ENCODE measurements at regions of chr2 and their contacts with region 1.

Region 1: DNA sequence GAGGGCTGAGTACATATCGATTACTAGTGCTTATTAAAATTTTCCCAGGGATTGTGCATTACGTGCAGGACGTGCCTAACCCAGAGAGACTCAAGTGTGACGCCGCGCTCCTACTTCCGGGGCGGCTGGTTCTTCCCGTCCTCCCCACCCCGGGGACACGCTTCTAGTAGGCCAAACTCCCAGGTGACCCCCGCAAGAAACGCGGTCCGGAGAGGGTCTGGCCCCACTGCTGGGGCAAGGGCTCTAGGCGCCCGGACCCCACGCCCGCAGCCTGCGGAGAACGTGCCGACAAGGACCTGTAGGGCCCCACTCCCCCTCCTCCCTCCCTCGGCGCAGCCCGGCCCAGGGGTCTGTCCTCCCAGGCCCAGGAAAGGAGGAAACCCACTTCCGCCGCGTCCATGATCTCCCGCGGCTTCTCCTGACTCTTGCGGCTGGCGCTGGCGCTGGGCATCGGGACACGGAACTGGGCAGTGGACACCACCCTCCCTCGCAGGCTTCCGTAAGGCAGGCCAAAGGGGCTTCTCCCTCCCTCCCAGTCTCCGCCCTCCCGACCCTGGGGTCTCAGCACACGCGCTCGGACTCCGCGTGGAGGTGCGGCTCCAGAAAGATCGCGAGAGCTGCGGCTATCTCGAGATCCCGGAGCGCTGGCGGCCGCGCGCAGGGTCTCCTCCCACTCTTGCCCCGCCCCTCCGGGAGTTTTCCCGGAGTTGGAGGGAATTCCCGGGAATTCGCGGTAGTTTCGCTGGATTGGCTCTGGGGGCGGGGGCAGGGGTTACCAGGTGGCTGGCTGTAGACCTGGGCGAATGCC is at the start of gene DARS1:
- DNase-seq: peak; percentile 58 to 91 (median 76)
- ATAC-seq: peak; percentile 82
- H3K4me3 ChIP-seq: peak within 1 kb of the TSS; percentile 99
- H3K4me3 Mint-ChIP-seq: peak within 1 kb of the TSS; percentile 94
- H3K27ac ChIP-seq: peak within 1 kb of the TSS; percentile 95 to 99
- H3K27ac Mint-ChIP-seq: peak within 1 kb of the TSS; percentile 98
- H3K4me1 ChIP-seq: peaks cover 30% of the 10 kb centered on the region
- H3K4me1 Mint-ChIP-seq: peaks cover 50% of the 10 kb centered on the region
- H3K27me3 ChIP-seq: no peaks in the 10 kb centered on the region
- H3K27me3 Mint-ChIP-seq: no peaks in the 10 kb centered on the region
- CTCF ChIP-seq: no peak
- total RNA-seq, gene DARS1: 33.4 to 35.8 TPM

Region 2: DNA sequence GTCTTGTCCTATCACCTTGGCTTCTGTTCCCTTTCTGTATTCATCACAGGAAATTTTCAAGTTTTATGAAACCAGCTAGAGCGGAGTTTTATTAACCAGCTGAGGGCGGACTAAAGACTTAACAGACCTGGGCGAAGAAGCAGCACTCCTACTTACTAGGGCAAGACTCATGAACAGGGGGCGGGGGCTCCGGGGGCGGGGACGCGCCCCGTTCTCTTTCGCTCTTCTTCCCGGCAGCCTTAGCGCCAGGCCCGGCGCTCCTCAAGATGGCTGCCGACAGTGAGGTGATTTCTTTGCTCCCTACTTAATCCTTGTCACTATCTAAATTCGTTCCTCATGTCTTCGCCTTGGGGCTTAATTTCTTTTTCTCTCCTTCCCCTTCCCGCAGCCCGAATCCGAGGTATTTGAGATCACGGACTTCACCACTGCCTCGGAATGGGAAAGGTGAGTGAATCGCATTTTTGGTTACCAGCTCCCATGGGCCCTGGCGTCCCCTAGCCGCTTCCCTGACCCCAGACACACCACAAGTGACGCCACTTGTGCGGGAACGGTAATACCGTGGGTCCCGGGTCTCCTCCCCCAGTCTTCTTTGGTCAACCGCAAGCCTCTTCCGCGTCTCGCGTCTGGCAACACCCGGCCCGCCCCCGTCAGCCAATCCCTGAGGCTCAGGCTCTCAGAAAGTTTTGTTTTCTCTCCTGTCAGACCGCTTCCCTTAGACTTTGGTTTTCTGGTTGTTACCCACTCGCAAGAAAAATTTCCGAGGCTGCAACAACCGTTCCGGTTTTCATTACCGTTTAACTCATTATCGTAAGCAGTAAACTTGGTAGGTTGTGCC is 933.0 kb before region 1 on chr2 and contains the start of gene RAB3GAP1:
- CTCF ChIA-PET with region 1: no interaction called
- POLR2A ChIA-PET with region 1: no interaction called
- intact Hi-C with region 1: loop called in 1 of 2 experiments (anchors 10 kb)
- DNase-seq: peak; percentile 80 to 97 (median 91)
- ATAC-seq: peak; percentile 80
- H3K4me3 ChIP-seq: peak within 1 kb of the TSS; percentile 79 to 80
- H3K4me3 Mint-ChIP-seq: peak within 1 kb of the TSS; percentile 92
- H3K27ac ChIP-seq: peak within 1 kb of the TSS; percentile 96
- H3K27ac Mint-ChIP-seq: peak within 1 kb of the TSS; percentile 99
- H3K4me1 ChIP-seq: peaks cover 11% of the 10 kb centered on the region
- H3K4me1 Mint-ChIP-seq: peaks cover 42% of the 10 kb centered on the region
- H3K27me3 ChIP-seq: peaks cover 0 to 3% of the 10 kb centered on the region in 2 experiments
- H3K27me3 Mint-ChIP-seq: no peaks in the 10 kb centered on the region
- CTCF ChIP-seq: no peak
- total RNA-seq, gene RAB3GAP1: 31.0 to 32.8 TPM

Region 3: DNA sequence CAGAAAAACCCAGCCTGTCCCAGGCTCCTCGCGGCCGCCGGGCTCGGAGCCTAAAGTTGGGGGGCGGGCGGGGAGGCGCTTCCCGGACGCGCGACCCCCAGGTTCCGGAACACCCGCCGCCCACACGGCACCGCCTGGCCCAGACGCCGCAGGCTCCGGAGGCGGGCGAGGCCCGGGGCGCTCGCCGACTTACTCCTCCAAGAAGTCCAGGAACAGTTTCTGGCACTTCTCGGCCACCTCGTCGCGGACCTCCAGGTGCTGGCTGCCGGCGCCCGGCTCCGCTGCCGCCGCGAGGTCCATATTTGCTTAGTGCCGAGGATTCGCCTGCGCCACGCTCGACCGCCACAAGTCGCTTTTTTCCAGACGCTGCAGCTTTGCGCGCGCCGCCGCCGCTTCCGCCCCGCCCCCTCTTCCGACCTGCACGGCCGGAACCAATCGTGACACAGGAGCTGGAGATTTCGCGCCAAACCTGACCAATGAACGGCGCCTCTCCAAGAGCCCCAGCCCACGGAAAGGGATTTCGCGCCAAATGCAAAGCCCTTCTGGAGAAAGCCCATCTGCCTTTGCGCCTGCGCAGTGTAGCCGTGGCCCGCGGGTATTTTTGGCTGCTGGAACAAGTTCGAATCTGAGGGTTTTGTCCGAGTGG is 109.0 kb before region 1 on chr2 and contains the start of gene MCM6:
- CTCF ChIA-PET with region 1: no interaction called
- POLR2A ChIA-PET with region 1: no interaction called
- intact Hi-C with region 1: loop called (anchors 1 to 5 kb)
- DNase-seq: peak; percentile 95 to 99 (median 97)
- ATAC-seq: peak; percentile 89
- H3K4me3 ChIP-seq: peak within 1 kb of the TSS; percentile 81 to 82
- H3K4me3 Mint-ChIP-seq: peak within 1 kb of the TSS; percentile 92
- H3K27ac ChIP-seq: peak within 1 kb of the TSS; percentile 85 to 96
- H3K27ac Mint-ChIP-seq: peak within 1 kb of the TSS; percentile 97
- H3K4me1 ChIP-seq: peaks cover 18% of the 10 kb centered on the region
- H3K4me1 Mint-ChIP-seq: peaks cover 37% of the 10 kb centered on the region
- H3K27me3 ChIP-seq: no peaks in the 10 kb centered on the region
- H3K27me3 Mint-ChIP-seq: no peaks in the 10 kb centered on the region
- CTCF ChIP-seq: no peak
- total RNA-seq, gene MCM6: 37.3 to 38.8 TPM

Region 4: DNA sequence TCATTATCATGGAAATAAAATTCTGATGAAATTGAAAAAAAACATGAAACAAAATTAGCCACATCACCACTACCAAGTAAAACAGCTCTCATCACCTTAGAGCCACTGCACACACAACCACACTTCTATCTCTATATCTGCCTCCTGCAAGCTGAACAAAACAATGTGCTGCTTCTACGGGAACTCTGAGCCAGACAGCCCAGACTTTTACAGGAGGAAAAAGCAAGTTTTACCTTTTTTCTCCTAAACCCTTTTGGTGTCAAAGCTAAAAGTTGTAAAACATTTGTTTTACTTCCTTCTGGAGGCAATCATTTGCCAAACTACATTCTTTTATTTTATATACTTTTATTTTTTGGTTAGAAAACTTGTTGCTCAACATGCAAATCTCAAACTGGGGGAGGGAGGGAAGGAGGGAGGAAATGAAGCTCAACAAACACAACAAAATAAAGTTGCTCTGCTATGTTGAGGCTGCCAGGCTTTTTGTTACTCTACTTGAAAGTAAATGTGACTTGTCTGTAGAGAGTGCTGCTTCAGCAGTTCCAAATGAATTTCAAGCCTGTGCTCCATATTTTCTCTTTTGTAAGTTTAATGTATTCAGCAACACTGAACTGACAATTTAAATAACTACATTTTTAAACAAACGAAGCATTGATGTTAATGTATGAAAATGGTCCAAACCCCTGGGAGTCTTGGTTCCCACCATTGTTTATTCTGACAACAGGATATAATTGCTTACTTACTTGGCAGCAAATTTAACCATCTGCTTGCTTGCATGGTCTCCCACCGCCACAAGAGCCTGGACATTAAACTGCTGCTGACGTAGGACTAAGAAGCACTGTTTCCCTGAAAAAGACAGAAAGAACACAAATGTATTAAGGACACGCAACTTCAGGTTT is 24.3 kb before region 1 on chr2:
- CTCF ChIA-PET with region 1: no interaction called
- POLR2A ChIA-PET with region 1: interaction called, 6 read pairs
- intact Hi-C with region 1: loop called in 1 of 2 experiments (anchors 2 kb)
- DNase-seq: peak in 3 of 9 experiments; percentile 23 to 44 (median 27)
- ATAC-seq: peak; percentile 63
- H3K4me3 ChIP-seq: no peak overlapping the region
- H3K4me3 Mint-ChIP-seq: peak overlapping the region; percentile 35
- H3K27ac ChIP-seq: peak overlapping the region in 1 of 2 experiments; percentile 52
- H3K27ac Mint-ChIP-seq: peak overlapping the region; percentile 89
- H3K4me1 ChIP-seq: peaks cover 26% of the 10 kb centered on the region
- H3K4me1 Mint-ChIP-seq: peaks cover 50% of the 10 kb centered on the region
- H3K27me3 ChIP-seq: no peaks in the 10 kb centered on the region
- H3K27me3 Mint-ChIP-seq: no peaks in the 10 kb centered on the region
- CTCF ChIP-seq: no peak

Region 5: DNA sequence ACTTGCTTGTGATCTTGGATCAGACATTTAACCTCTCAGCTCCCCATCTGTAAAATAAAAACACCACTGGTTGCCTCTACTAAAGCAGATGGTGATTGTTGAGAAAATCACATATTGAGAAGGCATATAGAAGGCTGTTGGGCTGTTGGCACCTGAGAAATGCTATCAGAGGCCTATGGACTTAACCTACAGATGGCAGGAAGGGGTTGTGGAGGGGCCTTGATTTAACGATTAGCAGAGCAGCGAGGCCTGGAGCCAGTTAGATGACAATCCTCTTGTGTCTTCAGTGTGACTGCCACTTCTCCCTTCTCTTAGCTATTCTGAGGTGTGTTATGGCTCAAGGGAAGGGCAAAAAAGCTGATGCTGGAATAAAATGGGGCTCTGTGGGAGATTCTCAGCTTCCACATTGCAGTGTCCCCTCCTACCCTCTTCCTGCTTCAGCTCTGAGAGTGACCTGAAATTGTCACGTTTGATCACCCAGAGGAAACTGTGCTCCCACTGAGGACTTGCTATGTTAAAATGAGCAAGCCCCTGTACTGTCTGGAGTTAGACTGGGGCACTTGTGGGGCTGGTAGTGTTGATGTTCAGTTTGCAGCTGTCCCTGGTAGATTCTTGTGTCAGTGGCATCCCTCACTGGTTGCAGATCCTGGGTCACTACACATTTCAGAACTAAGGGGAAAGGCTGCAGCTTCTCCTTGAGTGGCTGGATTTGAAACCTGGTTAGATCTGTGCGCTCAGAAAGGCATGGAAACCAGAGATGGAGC is 101.2 kb after region 1 on chr2:
- CTCF ChIA-PET with region 1: no interaction called
- POLR2A ChIA-PET with region 1: no interaction called
- intact Hi-C with region 1: no loop called
- DNase-seq: no peak
- ATAC-seq: no peak
- H3K4me3 ChIP-seq: no peak overlapping the region
- H3K4me3 Mint-ChIP-seq: no peak overlapping the region
- H3K27ac ChIP-seq: no peak overlapping the region
- H3K27ac Mint-ChIP-seq: no peak overlapping the region
- H3K4me1 ChIP-seq: no peaks in the 10 kb centered on the region
- H3K4me1 Mint-ChIP-seq: peaks cover 10% of the 10 kb centered on the region
- H3K27me3 ChIP-seq: no peaks in the 10 kb centered on the region
- H3K27me3 Mint-ChIP-seq: no peaks in the 10 kb centered on the region
- CTCF ChIP-seq: no peak

Region 6: DNA sequence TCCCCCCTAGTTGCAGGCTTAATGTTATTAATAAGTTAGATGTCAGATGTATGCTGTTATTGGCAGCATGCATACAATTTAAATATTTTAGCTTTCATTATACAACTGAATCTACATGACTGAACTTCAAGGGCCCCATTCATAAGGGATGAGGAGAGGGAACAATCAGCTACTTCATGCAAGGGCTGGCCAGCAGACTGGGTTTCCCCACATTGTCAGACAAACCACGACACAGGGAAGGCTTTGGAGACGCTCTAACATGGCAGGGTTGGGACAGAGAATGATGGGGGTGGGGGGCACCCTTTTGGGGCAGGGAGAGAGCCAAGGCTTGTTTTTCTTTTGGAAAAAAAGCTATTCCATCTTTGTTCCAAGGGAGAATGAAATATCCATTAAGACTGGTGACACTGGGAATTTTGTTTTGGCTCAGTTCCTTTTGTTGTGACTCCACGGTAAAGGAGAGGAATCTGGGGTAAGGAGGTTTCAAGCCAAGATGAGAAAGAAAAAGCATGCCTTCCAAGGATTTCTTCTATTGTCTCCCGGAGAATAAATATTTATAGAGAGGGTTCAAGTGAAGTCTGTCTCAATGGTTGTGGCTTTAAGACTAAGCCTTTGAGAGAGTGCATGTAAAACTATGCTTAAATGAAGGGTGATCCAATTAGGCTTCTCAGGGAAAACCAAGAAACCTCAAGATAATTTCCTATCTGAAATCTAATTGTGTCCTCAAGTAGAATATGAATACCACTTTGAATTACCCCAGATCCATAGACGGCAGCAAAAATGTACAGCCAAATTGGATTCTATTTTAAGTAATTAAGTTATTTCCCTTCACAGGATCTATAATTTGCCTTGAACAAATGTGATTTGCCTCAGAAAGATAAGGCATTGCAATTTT is 127.3 kb after region 1 on chr2:
- CTCF ChIA-PET with region 1: no interaction called
- POLR2A ChIA-PET with region 1: interaction called, 3 read pairs
- intact Hi-C with region 1: loop called in 1 of 2 experiments (anchors 1 kb)
- DNase-seq: peak in 3 of 9 experiments; percentile 58 to 71 (median 69)
- ATAC-seq: no peak
- H3K4me3 ChIP-seq: no peak overlapping the region
- H3K4me3 Mint-ChIP-seq: no peak overlapping the region
- H3K27ac ChIP-seq: no peak overlapping the region
- H3K27ac Mint-ChIP-seq: peak overlapping the region; percentile 66
- H3K4me1 ChIP-seq: peaks cover 34% of the 10 kb centered on the region
- H3K4me1 Mint-ChIP-seq: peaks cover 35% of the 10 kb centered on the region
- H3K27me3 ChIP-seq: no peaks in the 10 kb centered on the region
- H3K27me3 Mint-ChIP-seq: no peaks in the 10 kb centered on the region
- CTCF ChIP-seq: no peak

Region 7: GRCh38 chr2:136135921-136136906 is 151.0 kb after region 1 on chr2:
- CTCF ChIA-PET with region 1: no interaction called
- POLR2A ChIA-PET with region 1: interaction called, 10 read pairs
- intact Hi-C with region 1: no loop called
- DNase-seq: peak; percentile 71 to 98 (median 84)
- ATAC-seq: peak; percentile 52
- H3K4me3 ChIP-seq: peak overlapping the region; percentile 10 to 23
- H3K4me3 Mint-ChIP-seq: peak overlapping the region; percentile 61
- H3K27ac ChIP-seq: peak overlapping the region; percentile 89 to 98
- H3K27ac Mint-ChIP-seq: peak overlapping the region; percentile 100
- H3K4me1 ChIP-seq: peaks cover 87% of the 10 kb centered on the region
- H3K4me1 Mint-ChIP-seq: peaks cover 96% of the 10 kb centered on the region
- H3K27me3 ChIP-seq: no peaks in the 10 kb centered on the region
- H3K27me3 Mint-ChIP-seq: no peaks in the 10 kb centered on the region
- CTCF ChIP-seq: no peak

Region 8: DNA sequence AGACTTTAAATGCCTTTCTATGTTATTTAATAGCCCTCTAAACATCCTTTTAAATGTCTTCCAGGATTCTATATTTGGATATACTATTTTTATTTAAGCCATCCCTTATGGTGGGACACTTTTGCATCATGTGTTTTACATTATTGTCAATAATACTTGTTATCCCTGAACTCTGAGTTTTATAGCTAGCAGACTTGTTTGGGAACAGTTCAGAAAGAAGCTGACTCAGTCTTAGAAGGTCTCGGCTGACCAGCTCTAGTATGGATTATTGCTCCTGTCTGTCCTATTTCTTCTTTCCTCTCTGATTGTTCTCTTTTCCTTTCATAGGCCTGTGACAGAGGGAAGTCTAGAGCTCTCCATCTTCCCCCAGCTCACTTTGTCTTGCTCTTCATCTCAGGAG is 210.0 kb after region 1 on chr2:
- CTCF ChIA-PET with region 1: no interaction called
- POLR2A ChIA-PET with region 1: no interaction called
- intact Hi-C with region 1: no loop called
- DNase-seq: no peak
- ATAC-seq: no peak
- H3K4me3 ChIP-seq: no peak overlapping the region
- H3K4me3 Mint-ChIP-seq: no peak overlapping the region
- H3K27ac ChIP-seq: no peak overlapping the region
- H3K27ac Mint-ChIP-seq: no peak overlapping the region
- H3K4me1 ChIP-seq: no peaks in the 10 kb centered on the region
- H3K4me1 Mint-ChIP-seq: peaks cover 3% of the 10 kb centered on the region
- H3K27me3 ChIP-seq: no peaks in the 10 kb centered on the region
- H3K27me3 Mint-ChIP-seq: no peaks in the 10 kb centered on the region
- CTCF ChIP-seq: no peak